ENCODE measurements at regions of chr18 and their contacts with region 1.

Region 1: DNA sequence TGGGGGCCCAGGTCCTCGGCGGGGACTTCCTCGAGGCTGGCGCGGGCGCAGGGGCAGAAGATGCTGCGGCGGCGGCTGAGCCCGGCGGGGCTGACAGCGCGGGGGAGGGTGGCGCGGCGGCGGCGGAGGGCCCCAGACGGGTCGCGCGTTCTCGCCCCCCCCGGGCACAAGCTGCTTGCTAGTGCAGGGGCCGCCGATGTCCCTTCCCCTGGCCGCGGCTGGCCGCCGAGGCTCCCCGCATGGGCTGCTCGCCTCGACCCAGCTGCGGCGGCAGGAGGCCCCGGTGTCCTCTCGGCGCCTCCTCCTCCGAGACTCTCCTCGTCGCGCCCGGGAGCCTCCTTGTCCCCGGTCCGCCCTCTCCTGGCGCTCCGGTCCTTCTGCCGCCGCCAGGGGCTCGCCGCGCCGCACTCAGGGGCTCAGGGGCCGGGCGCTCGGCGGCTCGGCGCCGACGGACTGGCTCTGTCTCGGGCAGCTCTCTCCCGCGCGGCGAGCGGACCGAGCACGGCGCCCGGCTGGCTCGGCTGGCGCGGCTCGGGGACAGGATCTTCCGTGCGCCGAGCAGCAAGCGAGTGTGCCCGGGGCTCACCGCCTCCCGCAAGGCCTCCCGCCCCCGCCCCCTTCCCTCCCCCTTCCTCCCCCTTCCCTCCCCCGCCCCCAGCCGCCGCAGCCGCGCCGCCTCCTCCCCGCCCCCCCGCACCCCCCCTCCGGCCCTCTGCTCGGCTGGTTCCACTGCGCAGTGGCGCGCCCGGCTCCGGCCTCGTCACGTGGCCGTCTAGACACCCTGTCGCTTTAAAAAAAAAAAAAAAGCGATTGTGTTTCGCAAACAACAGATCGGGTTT is 902 bp upstream of the SMAD7 start:
- DNase-seq: peak; percentile 75 to 91
- ATAC-seq: peak; percentile 45 to 78 (median 59)
- H3K4me3 ChIP-seq: peak overlapping the region; percentile 85
- H3K4me3 Mint-ChIP-seq: peak overlapping the region; percentile 100
- H3K27ac ChIP-seq: peak overlapping the region; percentile 97
- H3K27ac Mint-ChIP-seq: peak overlapping the region; percentile 95 to 99
- H3K4me1 ChIP-seq: peaks cover 30% of the 10 kb centered on the region
- H3K4me1 Mint-ChIP-seq: peaks cover 39 to 45% of the 10 kb centered on the region in 2 donors
- H3K27me3 ChIP-seq: no peaks in the 10 kb centered on the region
- H3K27me3 Mint-ChIP-seq: no peaks in the 10 kb centered on the region
- CTCF ChIP-seq: no peak

Region 2: GRCh38 chr18:48813833-48814489 is 137.7 kb before region 1 on chr18:
- intact Hi-C with region 1: loop called (anchors 1 kb)
- DNase-seq: peak; percentile 71 to 89
- ATAC-seq: peak; percentile 52 to 81 (median 74)
- H3K4me3 ChIP-seq: no peak overlapping the region
- H3K4me3 Mint-ChIP-seq: peak overlapping the region; percentile 61
- H3K27ac ChIP-seq: peak overlapping the region; percentile 99
- H3K27ac Mint-ChIP-seq: peak overlapping the region; percentile 97 to 99
- H3K4me1 ChIP-seq: peaks cover 55% of the 10 kb centered on the region
- H3K4me1 Mint-ChIP-seq: peaks cover 60 to 75% of the 10 kb centered on the region in 2 donors
- H3K27me3 ChIP-seq: no peaks in the 10 kb centered on the region
- H3K27me3 Mint-ChIP-seq: no peaks in the 10 kb centered on the region
- CTCF ChIP-seq: no peak

Region 3: DNA sequence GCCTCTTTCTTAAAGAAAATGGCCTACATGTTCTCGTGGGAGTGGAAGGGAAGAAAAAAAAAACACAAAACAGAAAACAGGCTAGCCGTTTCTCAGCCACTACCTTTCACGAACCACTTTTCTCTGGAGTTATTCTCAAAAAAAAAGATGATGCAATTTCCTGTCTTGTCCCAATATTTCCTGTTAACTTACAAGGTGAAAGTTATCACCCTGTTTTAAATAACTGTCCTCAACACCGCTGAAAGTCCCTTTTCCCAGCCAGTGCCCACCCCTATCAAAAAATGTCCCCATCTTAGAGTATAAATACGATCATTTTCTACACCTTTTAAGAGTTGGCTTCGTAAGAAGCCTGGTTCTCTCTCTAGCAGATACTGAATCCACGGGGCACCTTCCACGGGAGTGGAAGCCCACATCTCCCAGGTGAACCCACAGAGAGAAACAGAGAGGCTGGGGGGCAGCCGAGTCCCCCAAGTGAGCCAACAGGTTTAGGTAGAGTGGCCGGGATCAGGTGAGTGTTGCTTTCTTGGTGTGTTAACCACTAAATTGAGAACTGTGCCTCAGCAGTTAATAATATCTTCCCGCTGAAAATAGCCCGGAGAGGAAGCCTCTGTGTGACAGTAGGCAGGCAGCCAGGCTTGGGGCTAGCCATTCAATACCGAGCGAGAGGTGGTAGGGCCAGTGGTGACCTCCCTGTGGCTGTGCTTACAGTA is 16.8 kb before region 1 on chr18:
- intact Hi-C with region 1: loop called (anchors 2 kb)
- DNase-seq: peak in 1 of 2 donors; percentile 56
- ATAC-seq: peak; percentile 16 to 47 (median 32)
- H3K4me3 ChIP-seq: no peak overlapping the region
- H3K4me3 Mint-ChIP-seq: peak overlapping the region; percentile 88
- H3K27ac ChIP-seq: peak overlapping the region; percentile 83
- H3K27ac Mint-ChIP-seq: peak overlapping the region; percentile 95 to 96
- H3K4me1 ChIP-seq: peaks cover 94% of the 10 kb centered on the region
- H3K4me1 Mint-ChIP-seq: peaks cover 92 to 95% of the 10 kb centered on the region in 2 donors
- H3K27me3 ChIP-seq: no peaks in the 10 kb centered on the region
- H3K27me3 Mint-ChIP-seq: no peaks in the 10 kb centered on the region
- CTCF ChIP-seq: no peak

Region 4: DNA sequence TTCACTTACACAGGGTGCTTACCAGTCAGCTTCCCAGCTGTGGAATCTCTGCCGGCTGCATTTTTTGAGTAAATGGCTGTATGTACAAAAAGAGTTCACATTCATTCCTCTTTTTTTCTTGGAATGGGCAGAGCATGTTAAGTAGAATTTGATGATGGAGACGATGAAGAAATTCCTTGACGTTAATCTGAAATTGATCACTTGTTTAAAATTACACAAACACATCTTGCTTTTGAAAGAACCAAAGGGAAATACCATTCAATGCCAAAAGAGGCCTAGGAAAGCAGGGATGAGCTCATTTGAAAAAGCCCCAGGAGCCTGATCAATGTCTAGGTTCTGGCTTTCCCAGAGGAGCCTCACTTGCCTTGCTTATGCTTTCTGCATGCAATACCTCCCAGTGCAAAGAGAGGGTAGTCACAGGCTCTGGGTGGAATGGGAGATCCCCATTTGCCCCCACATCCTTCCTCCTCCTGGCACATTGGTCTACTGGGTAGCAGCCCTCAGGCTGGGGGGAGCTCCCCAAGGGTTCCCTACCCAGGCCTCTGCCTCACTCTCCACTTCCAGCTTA is 11.4 kb after region 1 on chr18:
- intact Hi-C with region 1: no loop called
- DNase-seq: peak in 1 of 2 donors; percentile 58
- ATAC-seq: peak; percentile 50 to 88 (median 56)
- H3K4me3 ChIP-seq: no peak overlapping the region
- H3K4me3 Mint-ChIP-seq: no peak overlapping the region
- H3K27ac ChIP-seq: no peak overlapping the region
- H3K27ac Mint-ChIP-seq: no peak overlapping the region
- H3K4me1 ChIP-seq: no peaks in the 10 kb centered on the region
- H3K4me1 Mint-ChIP-seq: peaks cover 5 to 7% of the 10 kb centered on the region in 2 donors
- H3K27me3 ChIP-seq: no peaks in the 10 kb centered on the region
- H3K27me3 Mint-ChIP-seq: peaks cover 4 to 11% of the 10 kb centered on the region in 2 donors
- CTCF ChIP-seq: no peak

Region 5: DNA sequence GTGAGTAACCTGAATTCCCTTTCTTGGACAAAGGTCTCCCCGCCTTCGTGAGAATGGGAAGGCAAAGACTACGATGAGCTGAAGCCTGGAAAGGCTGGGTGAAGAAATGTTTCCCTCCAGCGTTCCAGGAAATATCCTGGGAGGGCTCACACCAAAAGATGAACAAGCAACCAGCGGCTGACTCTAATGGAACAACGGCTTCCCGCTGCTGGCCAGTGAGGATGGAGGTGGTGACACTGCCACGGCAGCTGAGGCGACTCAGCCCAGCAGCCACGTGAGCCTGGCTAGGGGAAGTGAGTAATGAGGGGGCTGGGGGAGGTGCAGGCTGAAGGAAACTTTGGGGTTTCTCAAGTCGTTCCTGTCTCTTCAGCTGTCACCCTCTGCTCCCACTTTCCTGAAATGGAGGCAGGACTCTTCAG is 104.1 kb after region 1 on chr18:
- intact Hi-C with region 1: loop called (anchors 2 kb)
- DNase-seq: peak; percentile 29 to 67
- ATAC-seq: peak; percentile 57 to 73 (median 70)
- H3K4me3 ChIP-seq: no peak overlapping the region
- H3K4me3 Mint-ChIP-seq: peak overlapping the region; percentile 76
- H3K27ac ChIP-seq: no peak overlapping the region
- H3K27ac Mint-ChIP-seq: peak overlapping the region; percentile 79 to 93
- H3K4me1 ChIP-seq: peaks cover 74% of the 10 kb centered on the region
- H3K4me1 Mint-ChIP-seq: peaks cover 74 to 75% of the 10 kb centered on the region in 2 donors
- H3K27me3 ChIP-seq: no peaks in the 10 kb centered on the region
- H3K27me3 Mint-ChIP-seq: no peaks in the 10 kb centered on the region
- CTCF ChIP-seq: no peak

Region 6: DNA sequence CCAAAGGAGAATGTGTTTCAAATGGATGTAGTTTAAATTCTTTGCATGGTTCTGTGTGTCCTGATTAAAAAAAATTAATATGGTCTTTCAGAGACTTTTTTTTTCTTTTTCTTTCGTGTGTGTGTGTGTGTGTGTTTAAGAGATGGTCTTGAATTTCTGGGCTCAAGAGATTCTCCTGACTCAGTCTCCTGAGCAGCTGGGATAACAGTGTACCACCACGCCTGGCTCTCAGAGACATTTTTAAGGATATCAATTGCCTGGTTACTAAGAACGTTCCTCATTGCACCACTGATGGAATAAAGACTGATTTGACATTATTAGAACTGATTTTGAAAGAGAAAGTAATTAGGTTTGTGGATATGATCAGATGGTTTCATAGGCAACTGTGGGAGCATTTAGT is 162.9 kb after region 1 on chr18:
- intact Hi-C with region 1: no loop called
- DNase-seq: no peak
- ATAC-seq: no peak
- H3K4me3 ChIP-seq: no peak overlapping the region
- H3K4me3 Mint-ChIP-seq: no peak overlapping the region
- H3K27ac ChIP-seq: no peak overlapping the region
- H3K27ac Mint-ChIP-seq: no peak overlapping the region
- H3K4me1 ChIP-seq: no peaks in the 10 kb centered on the region
- H3K4me1 Mint-ChIP-seq: peaks cover 8 to 11% of the 10 kb centered on the region in 2 donors
- H3K27me3 ChIP-seq: no peaks in the 10 kb centered on the region
- H3K27me3 Mint-ChIP-seq: no peaks in the 10 kb centered on the region
- CTCF ChIP-seq: no peak

Region 7: DNA sequence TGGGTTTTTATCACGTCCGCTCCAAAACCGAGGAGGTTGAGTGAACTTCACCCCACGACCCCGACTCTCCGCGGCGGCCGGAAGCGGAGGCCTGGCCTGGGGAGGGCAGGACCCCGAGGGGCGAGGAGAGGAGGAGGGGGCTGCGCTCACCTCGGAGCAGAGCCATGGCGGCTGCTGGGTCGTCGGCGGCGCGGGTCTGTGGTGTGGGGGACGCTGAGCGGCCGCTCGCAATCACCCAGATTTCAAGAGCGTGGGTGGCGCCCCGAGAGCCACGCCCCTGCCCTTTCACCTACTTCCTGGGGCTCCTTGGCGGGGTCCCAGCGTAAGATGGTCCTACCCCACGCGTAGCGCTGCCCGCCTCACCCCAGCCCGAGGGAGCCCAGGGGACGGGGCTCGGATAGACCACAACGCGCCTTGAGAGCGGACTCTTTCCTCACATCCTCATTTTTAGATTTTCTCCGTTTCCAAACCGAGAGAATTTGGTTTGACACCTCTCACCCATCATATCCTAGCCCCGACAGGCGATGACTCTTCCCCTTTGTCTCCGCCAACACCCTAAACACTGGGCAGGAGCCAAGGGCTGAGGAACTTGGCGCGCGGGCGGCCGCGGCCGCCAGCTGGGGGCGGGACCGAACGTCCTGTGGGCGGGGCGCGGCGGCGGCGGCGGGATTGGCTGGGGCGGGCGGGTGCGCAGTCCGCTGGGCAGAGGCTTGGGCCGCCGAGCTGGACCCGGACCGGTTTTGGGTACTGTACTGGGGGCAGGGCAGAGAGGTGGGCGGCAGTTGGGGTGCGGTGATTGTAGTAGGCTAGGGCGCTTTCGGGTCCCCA is 861.9 kb after region 1 on chr18 and contains the start of gene ACAA2:
- intact Hi-C with region 1: loop called (anchors 10 kb)
- DNase-seq: peak; percentile 83 to 88
- ATAC-seq: peak; percentile 77 to 90 (median 83)
- H3K4me3 ChIP-seq: peak within 1 kb of the TSS; percentile 93
- H3K4me3 Mint-ChIP-seq: peak within 1 kb of the TSS; percentile 99
- H3K27ac ChIP-seq: peak within 1 kb of the TSS; percentile 99
- H3K27ac Mint-ChIP-seq: peak within 1 kb of the TSS; percentile 77 to 99
- H3K4me1 ChIP-seq: peaks cover 35% of the 10 kb centered on the region
- H3K4me1 Mint-ChIP-seq: peaks cover 82 to 83% of the 10 kb centered on the region in 2 donors
- H3K27me3 ChIP-seq: no peaks in the 10 kb centered on the region
- H3K27me3 Mint-ChIP-seq: no peaks in the 10 kb centered on the region
- CTCF ChIP-seq: no peak
- total RNA-seq, gene ACAA2: 47.0 to 71.7 (median 59.2) TPM

Measured in natural killer cell (primary cell).